Left ventricle myocardium superior (tissue), 1 donor: ENCODE measurements at regions of chr5 and their contacts with region 1.

Region 1: DNA sequence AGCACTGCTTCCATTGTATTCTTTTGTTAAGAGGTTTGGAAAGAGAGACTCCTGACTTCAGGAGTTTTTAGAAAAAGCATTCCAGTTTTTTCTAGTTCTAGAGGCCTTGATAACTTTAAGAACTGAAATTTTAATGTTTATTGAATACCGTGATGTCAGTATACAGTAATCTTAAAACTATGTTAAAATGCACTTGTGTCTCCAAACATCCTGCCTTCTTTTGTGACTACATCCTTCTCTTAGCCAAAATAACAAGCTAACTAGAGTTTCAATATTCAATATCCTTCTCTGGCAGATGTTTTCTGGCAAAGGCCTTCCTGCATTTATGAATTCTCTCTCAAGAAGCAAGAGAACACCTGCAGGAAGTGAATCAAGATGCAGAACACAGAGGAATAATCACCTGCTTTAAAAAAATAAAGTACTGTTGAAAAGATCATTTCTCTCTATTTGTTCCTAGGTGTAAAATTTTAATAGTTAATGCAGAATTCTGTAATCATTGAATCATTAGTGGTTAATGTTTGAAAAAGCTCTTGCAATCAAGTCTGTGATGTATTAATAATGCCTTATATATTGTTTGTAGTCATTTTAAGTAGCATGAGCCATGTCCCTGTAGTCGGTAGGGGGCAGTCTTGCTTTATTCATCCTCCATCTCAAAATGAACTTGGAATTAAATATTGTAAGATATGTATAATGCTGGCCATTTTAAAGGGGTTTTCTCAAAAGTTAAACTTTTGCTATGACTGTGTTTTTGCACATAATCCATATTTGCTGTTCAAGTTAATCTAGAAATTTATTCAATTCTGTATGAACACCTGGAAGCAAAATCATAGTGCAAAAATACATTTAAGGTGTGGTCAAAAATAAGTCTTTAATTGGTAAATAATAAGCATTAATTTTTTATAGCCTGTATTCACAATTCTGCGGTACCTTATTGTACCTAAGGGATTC is 43.1 kb downstream of the NDFIP1 start:
- DNase-seq: no peak
- ATAC-seq: peak; percentile 59

Region 2: DNA sequence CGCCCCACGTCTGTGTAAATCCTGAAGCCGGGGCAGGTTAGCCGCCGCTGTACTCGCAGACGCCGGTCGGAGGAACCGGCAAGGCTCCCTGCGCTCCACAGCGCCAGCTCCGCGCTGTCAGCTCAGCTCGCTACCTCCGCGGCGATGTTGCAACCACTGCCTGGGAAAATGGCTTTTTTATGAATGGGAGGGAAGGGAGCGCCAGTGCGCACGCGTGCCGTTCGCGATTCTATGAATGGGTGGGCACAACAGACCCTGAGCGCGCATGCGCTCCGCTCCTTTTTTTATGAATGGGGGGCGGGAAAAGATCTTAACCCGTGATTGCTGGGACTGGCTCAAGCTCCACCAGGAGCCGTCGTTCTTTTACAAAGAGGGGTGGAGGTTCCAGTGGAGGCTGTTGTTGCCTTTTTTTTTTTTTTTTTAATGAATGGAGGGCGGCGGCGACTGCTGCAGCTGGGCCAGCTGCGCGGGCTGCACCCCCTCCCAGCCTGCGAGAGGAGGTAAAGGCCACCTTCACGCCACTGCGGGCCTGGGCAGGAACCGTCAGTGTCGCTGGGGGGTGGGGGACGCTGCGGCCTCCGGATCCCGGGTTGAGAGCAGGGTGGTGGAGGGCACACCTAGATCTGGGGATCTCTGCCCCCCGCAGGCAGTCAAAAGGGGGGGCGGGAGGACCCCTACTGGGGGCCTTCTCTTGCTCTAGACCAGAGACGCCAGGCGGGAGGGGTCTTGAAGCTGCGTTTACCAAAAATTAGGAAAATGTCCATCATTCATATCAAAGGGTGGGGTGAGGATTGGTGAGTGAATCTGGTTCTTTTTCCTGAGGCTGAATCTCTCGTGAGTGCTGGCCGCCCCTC is 173.4 kb after region 1 on chr5 and contains the start of gene SPRY4:
- intact Hi-C with region 1: loop called (anchors 10 kb)
- DNase-seq: peak; percentile 95
- ATAC-seq: peak; percentile 80
- total RNA-seq, gene SPRY4: 8.3 TPM

Region 3: DNA sequence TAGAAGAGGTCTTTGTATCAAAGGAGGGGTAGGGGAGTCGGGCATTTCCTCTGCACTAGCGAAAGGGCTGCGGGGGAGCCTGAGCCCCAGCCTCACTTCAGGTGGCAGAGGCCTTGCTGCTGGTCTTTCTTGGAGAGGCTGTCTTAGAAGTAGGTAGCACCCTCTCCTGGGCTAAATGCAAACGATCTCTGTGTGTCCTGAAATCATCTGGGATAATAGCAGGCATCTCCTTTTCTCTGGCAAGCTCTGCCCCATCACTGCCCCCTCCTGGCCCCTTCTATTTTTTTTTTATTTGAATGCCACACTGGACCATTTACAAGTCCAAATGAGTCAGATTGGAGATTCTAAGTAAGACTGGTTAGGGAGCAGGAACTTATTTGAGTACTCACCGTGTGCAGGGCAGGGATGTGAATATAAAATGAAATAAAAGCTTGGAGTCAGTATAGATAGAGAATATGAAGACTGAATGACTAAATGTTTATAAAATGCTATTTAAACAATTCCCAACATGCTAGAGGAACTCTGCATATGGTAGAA is 397.1 kb after region 1 on chr5:
- intact Hi-C with region 1: loop called (anchors 2 kb)
- DNase-seq: no peak
- ATAC-seq: peak; percentile 91

Region 4: GRCh38 chr5:142699184-142699720 is 547.5 kb after region 1 on chr5:
- intact Hi-C with region 1: loop called (anchors 10 kb)
- DNase-seq: peak; percentile 92
- ATAC-seq: peak; percentile 86